Vagina (tissue), 2 donors: ENCODE measurements at regions of chr19 and their contacts with region 1.

Region 1: DNA sequence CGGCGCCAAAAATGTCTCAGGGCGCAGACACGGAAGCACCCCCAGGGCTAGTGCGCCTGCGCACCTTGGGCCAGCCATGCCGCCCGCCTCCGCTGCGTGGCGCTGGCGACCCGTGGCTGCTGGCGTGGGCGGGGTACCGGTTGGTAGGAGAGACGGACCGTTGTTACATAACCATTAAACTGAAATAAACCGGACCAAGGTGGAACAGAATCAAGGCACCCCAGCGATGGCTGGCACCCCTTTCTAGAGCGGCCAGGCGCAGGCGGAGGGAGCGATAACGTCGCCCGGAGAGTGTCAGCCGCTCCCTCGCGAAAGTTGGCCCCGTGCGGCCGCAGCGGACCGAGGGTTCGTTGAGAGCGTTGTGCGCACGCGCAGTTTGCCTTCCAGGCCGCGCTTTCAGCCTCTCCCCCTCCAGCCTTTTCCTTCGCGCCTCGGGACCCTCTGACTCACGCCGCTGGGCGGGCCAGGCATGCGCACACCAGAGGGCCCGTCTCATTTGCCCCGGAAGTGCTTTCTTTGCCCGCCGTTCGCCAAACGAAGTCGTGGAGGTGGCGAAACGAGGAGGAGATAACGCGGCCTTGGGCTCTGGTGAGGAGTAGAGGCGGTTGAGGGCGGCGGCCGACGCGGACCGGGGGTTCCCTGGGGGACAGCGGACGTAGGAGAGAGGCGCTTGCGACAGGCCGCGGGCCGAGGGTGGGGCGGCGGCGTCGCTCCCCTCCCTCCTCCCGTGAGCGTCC is at the starts of genes PLEKHJ1 and SF3A2:
- DNase-seq: peak; percentile 97 to 98
- H3K4me3 ChIP-seq: peak within 1 kb of the TSS; percentile 84 to 100
- H3K27ac ChIP-seq: peak within 1 kb of the TSS; percentile 97
- H3K4me1 ChIP-seq: peaks cover 68% of the 10 kb centered on the region
- H3K27me3 ChIP-seq: no peaks in the 10 kb centered on the region
- CTCF ChIP-seq: peak; percentile 73 to 99 (median 97)
- POLR2A ChIP-seq: peak in 1 of 2 donors; percentile 44
- total RNA-seq, gene PLEKHJ1: 30.7 TPM
- total RNA-seq, gene SF3A2: 71.2 TPM

Region 2: GRCh38 chr19:2168619-2169424 is 67.7 kb before region 1 on chr19:
- intact Hi-C with region 1: loop called (anchors 5 kb)
- DNase-seq: peak in 1 of 2 donors; percentile 97
- H3K4me3 ChIP-seq: peak overlapping the region in 1 of 2 donors; percentile 15
- H3K27ac ChIP-seq: peak overlapping the region; percentile 84
- H3K4me1 ChIP-seq: peaks cover 55% of the 10 kb centered on the region
- H3K27me3 ChIP-seq: no peaks in the 10 kb centered on the region
- CTCF ChIP-seq: no peak
- POLR2A ChIP-seq: no peak

Region 3: DNA sequence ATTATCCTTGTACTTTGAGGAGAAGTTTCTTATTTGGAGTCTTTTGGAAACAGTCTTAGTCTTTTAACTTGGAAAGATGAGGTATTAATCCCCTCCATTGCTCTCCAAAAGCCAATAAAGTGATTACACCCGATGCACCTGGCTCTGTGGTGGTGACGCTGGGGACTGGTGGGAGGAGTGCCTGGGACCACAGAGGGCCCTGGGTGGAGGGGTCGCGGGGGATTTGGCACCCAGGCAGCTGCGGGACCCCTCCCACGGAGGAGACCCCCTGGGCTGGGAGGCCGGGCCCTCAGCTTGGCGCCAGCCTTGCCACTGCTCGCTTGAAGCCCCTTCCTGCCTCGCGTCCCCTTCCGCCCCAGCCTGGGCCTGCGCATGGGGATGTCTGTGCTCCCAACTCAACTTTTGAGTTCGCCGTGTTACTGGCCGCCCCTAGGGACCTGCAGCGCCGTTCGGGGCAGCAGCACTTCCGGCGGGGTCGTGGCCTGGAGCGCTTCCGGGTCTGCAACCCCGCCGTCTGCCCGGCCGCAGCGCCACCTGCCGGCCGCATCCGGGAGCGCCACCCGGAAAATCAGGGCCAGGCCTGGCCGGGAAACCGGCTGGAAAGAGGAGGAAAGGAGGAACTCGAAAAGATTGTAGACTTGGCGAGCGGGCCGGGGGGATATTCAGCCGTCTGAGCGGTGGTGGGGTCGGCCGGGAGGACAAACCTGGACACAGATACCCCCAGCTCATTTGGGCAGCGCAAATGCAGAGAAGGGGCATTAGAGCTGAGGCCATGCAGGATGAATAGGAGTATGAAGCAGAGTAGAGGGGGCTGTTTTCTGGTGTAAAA is 37.1 kb after region 1 on chr19:
- intact Hi-C with region 1: loop called (anchors 1 kb)
- DNase-seq: no peak
- H3K4me3 ChIP-seq: peak overlapping the region; percentile 22 to 37
- H3K27ac ChIP-seq: peak overlapping the region; percentile 99
- H3K4me1 ChIP-seq: peaks cover 59% of the 10 kb centered on the region
- H3K27me3 ChIP-seq: no peaks in the 10 kb centered on the region
- CTCF ChIP-seq: peak; percentile 91 to 98 (median 92)
- POLR2A ChIP-seq: no peak

Region 4: DNA sequence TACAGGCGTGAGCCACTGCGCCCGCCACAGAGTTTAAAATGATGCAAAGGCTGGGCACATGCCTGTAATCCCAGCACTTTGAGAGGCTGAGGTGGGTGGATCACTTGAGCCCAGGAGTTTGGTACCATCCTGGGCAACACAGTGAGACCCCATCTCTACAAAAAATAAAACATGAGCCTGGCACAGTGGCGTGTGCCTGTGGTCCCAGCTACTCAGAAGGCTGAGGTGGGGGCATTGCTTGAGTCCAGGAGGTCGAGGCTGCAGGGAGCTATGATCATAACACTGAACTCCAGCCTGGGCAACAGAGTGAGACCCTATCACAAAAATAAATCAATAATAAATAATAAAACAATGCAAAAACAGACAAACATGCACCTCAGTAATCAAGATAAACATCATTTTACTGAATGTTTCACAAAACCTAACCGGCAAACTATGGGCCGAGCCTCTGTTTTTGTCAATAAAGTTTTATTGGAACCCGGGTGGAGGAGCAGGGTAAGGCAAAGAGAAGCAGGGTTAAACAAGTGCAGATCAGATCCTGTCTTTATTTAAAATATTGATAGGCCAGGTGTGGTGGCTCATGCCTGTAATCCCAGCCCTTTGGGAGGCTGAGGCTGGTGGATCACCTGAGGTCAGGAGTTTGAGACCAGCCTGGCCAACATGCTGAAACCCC is 47.5 kb after region 1 on chr19:
- intact Hi-C with region 1: no loop called
- DNase-seq: no peak
- H3K4me3 ChIP-seq: no peak overlapping the region
- H3K27ac ChIP-seq: no peak overlapping the region
- H3K4me1 ChIP-seq: peaks cover 13% of the 10 kb centered on the region
- H3K27me3 ChIP-seq: no peaks in the 10 kb centered on the region
- CTCF ChIP-seq: no peak
- POLR2A ChIP-seq: no peak

Region 5: GRCh38 chr19:2391118-2391725 is 154.7 kb after region 1 on chr19:
- intact Hi-C with region 1: loop called (anchors 5 kb)
- DNase-seq: no peak
- H3K4me3 ChIP-seq: no peak overlapping the region
- H3K27ac ChIP-seq: no peak overlapping the region
- H3K4me1 ChIP-seq: no peaks in the 10 kb centered on the region
- H3K27me3 ChIP-seq: no peaks in the 10 kb centered on the region
- CTCF ChIP-seq: peak; percentile 46 to 69 (median 56)
- POLR2A ChIP-seq: no peak